Activated naive CD4-positive, alpha-beta T cell treated with anti-CD3 and anti-CD28 coated beads, Interleukin-2, amount 10 ng/mL, durations not matched to agents 7 days and 5 days (primary cell): ENCODE measurements at regions of chr9 and their contacts with region 1.

Region 1: GRCh38 chr9:21434202-21435014 is 5.8 kb upstream of the IFNA1 start:
- DNase-seq: peak; percentile 70
- H3K4me3 Mint-ChIP-seq: no peak overlapping the region
- H3K27ac Mint-ChIP-seq: no peak overlapping the region
- H3K4me1 Mint-ChIP-seq: no peaks in the 10 kb centered on the region
- H3K27me3 Mint-ChIP-seq: peaks cover 41% of the 10 kb centered on the region

Region 2: GRCh38 chr9:21234153-21234687 is 200.2 kb before region 1 on chr9:
- CTCF ChIA-PET with region 1: no interaction called
- DNase-seq: no peak
- H3K4me3 Mint-ChIP-seq: no peak overlapping the region
- H3K27ac Mint-ChIP-seq: no peak overlapping the region
- H3K4me1 Mint-ChIP-seq: peaks cover 8% of the 10 kb centered on the region
- H3K27me3 Mint-ChIP-seq: peaks cover 33% of the 10 kb centered on the region

Region 3: GRCh38 chr9:21305213-21305612 is 129.2 kb before region 1 on chr9 and contains the start of gene IFNA5:
- CTCF ChIA-PET with region 1: no interaction called
- DNase-seq: no peak
- H3K4me3 Mint-ChIP-seq: no peak within 1 kb of the TSS
- H3K27ac Mint-ChIP-seq: no peak within 1 kb of the TSS
- H3K4me1 Mint-ChIP-seq: no peaks in the 10 kb centered on the region
- H3K27me3 Mint-ChIP-seq: peaks cover 13% of the 10 kb centered on the region

Region 4: GRCh38 chr9:21334701-21335632 is 99.4 kb before region 1 on chr9 and contains the start of gene KLHL9:
- CTCF ChIA-PET with region 1: interaction called, 17 read pairs
- DNase-seq: peak; percentile 89
- H3K4me3 Mint-ChIP-seq: peak within 1 kb of the TSS; percentile 87
- H3K27ac Mint-ChIP-seq: peak within 1 kb of the TSS; percentile 93
- H3K4me1 Mint-ChIP-seq: peaks cover 53% of the 10 kb centered on the region
- H3K27me3 Mint-ChIP-seq: peaks cover 15% of the 10 kb centered on the region

Region 5: DNA sequence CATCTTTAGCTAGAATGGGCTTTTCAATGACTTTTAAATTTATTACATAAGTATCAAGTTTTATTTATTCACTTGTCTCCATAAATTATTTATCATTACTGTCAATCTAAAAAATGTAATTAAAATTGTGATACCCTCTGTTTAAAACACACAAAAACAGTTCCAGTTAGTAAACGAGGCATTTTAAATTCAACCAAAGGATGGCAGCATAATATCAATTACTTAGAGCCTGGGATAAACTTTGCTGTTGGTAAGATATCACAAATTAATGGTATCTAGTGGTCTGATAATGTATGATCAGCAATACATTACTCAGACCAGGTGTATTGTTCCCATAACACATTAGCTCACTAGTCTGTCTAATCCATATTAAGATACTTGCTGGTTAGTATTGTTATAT is 57.3 kb after region 1 on chr9:
- CTCF ChIA-PET with region 1: no interaction called
- DNase-seq: no peak
- H3K4me3 Mint-ChIP-seq: no peak overlapping the region
- H3K27ac Mint-ChIP-seq: no peak overlapping the region
- H3K4me1 Mint-ChIP-seq: peaks cover 2% of the 10 kb centered on the region
- H3K27me3 Mint-ChIP-seq: no peaks in the 10 kb centered on the region

Region 6: GRCh38 chr9:21527579-21527978 is 93.2 kb after region 1 on chr9:
- CTCF ChIA-PET with region 1: no interaction called
- DNase-seq: no peak
- H3K4me3 Mint-ChIP-seq: no peak overlapping the region
- H3K27ac Mint-ChIP-seq: no peak overlapping the region
- H3K4me1 Mint-ChIP-seq: no peaks in the 10 kb centered on the region
- H3K27me3 Mint-ChIP-seq: no peaks in the 10 kb centered on the region